Activated CD4-positive, alpha-beta memory T cell treated with anti-CD3 and anti-CD28 coated beads for 36 hours (primary cell): ENCODE measurements at regions of chr7 and their contacts with region 1.

Region 1: DNA sequence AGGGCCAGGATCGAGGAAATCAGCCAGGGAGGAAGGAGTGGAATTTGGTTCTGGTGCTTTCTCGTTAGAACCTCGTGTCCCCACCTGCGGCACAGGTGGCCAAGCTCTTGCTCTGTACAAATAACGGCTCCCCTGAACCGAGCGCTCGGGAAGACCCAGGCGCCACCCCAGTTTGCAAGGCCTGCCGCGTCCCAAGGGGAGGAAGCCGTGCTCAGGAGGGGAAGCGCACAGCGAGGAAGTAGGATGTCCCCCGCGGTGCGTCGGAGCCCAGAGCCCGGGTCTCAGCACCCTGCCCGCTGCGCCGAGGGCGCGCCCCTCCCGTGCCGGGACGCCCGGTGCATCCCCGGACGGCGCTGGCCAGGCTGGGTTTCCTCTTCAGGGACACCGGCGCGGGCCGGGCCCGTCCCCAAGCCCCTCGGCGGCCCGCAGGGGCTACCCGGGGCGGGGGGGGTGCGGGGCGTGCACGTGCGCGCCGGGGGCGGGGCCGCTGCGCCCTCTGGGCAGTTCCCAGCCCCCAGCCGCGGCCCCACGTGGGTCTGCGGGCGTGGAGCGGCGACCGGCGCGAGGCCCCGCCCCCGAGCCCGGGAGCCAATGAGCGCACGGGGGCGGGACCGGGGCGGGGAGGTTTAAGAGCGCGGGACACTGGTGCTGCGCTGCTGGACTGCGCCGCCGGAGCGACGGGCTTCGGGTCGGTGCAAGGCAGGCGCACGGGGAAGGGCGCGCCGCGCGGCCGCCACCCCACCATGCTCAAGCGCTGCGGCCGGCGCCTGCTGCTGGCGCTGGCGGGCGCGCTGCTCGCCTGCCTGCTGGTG is at the start of gene LFNG:
- DNase-seq: peak; percentile 86
- H3K4me3 Mint-ChIP-seq: peak within 1 kb of the TSS; percentile 97
- H3K27ac Mint-ChIP-seq: peak within 1 kb of the TSS; percentile 81
- H3K4me1 Mint-ChIP-seq: peaks cover 27% of the 10 kb centered on the region
- H3K27me3 Mint-ChIP-seq: no peaks in the 10 kb centered on the region
- total RNA-seq, gene LFNG: 33.0 to 33.1 TPM

Region 2: DNA sequence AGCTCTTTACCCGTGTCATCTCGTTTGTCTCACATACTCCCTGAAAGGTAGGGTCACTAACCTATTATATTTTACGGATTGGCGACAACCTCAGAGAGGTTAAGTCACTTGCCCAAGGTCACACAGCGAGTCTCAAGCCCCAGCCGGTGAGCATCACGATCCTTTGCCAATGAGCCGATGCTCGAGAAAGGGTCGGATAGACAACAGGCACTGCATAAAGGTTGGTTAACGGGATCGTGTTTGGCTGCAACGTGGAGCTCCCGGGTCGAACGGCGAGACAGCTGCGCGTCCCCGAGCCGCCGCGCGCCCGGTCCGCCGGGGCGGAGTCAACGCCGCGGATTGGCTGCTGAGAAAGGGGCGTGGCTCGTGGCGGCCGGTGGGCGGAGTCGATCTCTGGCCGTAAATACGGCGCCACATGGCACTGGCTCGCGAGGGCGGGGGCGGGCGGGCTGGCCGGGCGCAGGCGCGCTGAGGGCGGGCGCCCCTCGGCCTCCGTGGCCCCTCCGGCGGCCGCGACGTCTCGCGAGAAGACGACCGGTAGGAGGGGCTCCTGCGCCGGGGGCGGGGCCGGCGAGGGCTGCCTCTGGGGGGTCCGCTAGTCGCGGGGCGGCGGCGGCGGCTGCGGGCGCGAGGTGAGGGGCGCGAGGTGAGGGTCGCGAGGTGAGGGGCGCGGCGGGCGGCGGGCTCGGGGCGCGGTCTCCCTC is 116.2 kb before region 1 on chr7 and contains the start of gene CHST12:
- CTCF ChIA-PET with region 1: no interaction called
- POLR2A ChIA-PET with region 1: no interaction called
- intact Hi-C with region 1: loop called (anchors 5 kb)
- DNase-seq: peak; percentile 96
- H3K4me3 Mint-ChIP-seq: peak within 1 kb of the TSS; percentile 79
- H3K27ac Mint-ChIP-seq: no peak within 1 kb of the TSS
- H3K4me1 Mint-ChIP-seq: peaks cover 45% of the 10 kb centered on the region
- H3K27me3 Mint-ChIP-seq: no peaks in the 10 kb centered on the region
- total RNA-seq, gene CHST12: 3.7 to 3.9 TPM

Region 3: GRCh38 chr7:2477447-2478398 is 41.6 kb before region 1 on chr7:
- CTCF ChIA-PET with region 1: no interaction called
- POLR2A ChIA-PET with region 1: no interaction called
- intact Hi-C with region 1: loop called (anchors 5 kb)
- DNase-seq: peak; percentile 79
- H3K4me3 Mint-ChIP-seq: no peak overlapping the region
- H3K27ac Mint-ChIP-seq: no peak overlapping the region
- H3K4me1 Mint-ChIP-seq: no peaks in the 10 kb centered on the region
- H3K27me3 Mint-ChIP-seq: no peaks in the 10 kb centered on the region

Region 4: GRCh38 chr7:2508327-2509215 is 10.8 kb before region 1 on chr7:
- CTCF ChIA-PET with region 1: no interaction called
- POLR2A ChIA-PET with region 1: interaction called, 18 read pairs
- intact Hi-C with region 1: loop called (anchors 1 kb)
- DNase-seq: peak; percentile 84
- H3K4me3 Mint-ChIP-seq: peak overlapping the region; percentile 58
- H3K27ac Mint-ChIP-seq: peak overlapping the region; percentile 79
- H3K4me1 Mint-ChIP-seq: peaks cover 55% of the 10 kb centered on the region
- H3K27me3 Mint-ChIP-seq: no peaks in the 10 kb centered on the region

Region 5: DNA sequence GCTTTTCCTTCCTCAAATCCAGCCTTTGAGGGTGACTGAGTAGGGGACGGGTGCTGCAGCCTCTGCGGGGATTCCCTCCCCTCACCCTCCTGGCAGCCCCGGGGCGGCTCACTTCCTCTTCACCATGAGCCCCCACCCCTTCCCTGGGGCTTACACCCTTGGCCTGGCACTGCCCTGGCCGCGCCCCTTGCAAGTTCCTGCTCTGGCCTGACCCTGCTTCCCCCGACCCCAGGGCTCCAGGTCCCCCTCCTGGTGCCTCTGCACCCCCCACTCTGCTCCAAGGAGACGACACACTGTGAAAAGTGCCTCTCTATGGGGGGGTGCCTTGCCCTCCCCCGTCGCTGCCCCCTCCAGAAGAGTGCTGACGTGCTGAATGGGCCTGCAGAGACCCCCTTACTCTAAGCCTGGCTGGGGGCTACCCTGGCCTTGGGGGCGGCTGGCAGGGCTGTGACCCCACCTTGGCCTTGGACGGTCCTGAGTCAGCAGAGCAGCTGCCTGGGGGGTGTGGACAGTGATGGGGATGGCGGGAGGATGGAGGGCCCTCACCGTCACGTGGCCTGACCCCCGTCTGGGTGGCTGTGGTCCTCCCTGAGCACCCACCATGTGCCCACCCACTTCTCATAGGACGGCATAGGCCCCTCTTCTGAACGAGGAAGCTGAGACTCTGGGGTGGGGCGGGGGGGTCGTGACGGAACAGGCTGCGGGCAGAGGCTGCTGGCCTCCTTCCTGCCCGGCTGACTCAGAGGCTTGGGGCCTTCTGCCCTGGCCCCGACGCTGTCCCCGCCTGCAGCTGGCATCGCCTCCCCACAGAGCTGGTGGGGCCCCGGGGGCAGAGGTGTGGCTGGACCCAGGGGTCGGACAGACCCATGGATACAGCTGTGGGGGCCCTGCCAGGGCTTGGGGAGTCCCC is 10.1 kb after region 1 on chr7:
- CTCF ChIA-PET with region 1: no interaction called
- POLR2A ChIA-PET with region 1: interaction called, 5 read pairs
- intact Hi-C with region 1: loop called (anchors 1 kb)
- DNase-seq: peak; percentile 78
- H3K4me3 Mint-ChIP-seq: peak overlapping the region; percentile 63
- H3K27ac Mint-ChIP-seq: peak overlapping the region; percentile 96
- H3K4me1 Mint-ChIP-seq: peaks cover 54% of the 10 kb centered on the region
- H3K27me3 Mint-ChIP-seq: no peaks in the 10 kb centered on the region